ENCODE measurements at regions of chr4 and their contacts with region 1.

Region 1: GRCh38 chr4:105715692-105716278 is 7.2 kb downstream of the GSTCD start:
- DNase-seq: peak in 2 of 9 experiments; percentile 32 to 53
- ATAC-seq: no peak
- H3K4me3 ChIP-seq: no peak overlapping the region
- H3K4me3 Mint-ChIP-seq: no peak overlapping the region
- H3K27ac ChIP-seq: no peak overlapping the region
- H3K27ac Mint-ChIP-seq: no peak overlapping the region
- H3K4me1 ChIP-seq: peaks cover 5% of the 10 kb centered on the region
- H3K4me1 Mint-ChIP-seq: peaks cover 3% of the 10 kb centered on the region
- H3K27me3 ChIP-seq: no peaks in the 10 kb centered on the region
- H3K27me3 Mint-ChIP-seq: no peaks in the 10 kb centered on the region
- CTCF ChIP-seq: peak; percentile 54

Region 2: DNA sequence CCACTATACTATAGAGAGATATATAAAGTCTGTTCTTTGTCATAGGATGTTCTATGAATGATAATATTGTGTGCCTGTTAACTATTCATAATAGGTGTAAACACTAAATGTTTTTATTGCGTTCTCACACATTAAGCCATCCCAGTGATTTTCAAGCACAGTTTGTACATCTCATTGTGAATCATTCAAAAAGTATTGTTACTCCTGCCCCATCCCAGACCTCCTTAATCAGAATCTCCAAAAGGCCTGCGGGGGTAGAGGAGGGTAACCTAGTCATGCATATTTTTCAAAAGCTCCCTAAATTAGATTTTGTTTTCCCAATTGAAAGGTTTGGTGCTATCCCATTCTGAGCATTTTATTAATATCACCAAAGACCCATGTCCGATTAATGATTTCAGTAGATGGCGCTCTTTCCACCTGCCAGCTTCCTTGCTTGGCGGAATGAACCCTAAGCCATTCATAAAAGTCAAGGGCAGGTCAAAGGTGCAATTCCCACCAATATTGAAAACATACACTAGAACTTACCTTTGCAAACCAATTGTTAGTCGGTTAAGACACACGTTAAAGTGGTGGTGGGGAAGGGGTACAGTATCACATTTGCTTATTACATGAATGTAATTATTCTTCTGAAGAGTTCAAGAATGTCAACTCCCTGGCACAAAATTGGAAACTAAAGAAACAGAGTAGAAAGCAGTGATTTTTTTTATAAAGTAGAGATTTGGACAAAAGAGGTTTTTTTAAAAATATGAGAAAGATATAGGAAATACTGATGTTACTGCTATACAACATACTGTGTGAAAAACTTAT is 574.9 kb before region 1 on chr4:
- CTCF ChIA-PET with region 1: interaction called, 5 read pairs
- POLR2A ChIA-PET with region 1: no interaction called
- intact Hi-C with region 1: loop called in 1 of 2 experiments (anchors 1 kb)
- DNase-seq: peak in 7 of 9 experiments; percentile 26 to 77 (median 44)
- ATAC-seq: no peak
- H3K4me3 ChIP-seq: no peak overlapping the region
- H3K4me3 Mint-ChIP-seq: no peak overlapping the region
- H3K27ac ChIP-seq: no peak overlapping the region
- H3K27ac Mint-ChIP-seq: no peak overlapping the region
- H3K4me1 ChIP-seq: peaks cover 6% of the 10 kb centered on the region
- H3K4me1 Mint-ChIP-seq: peaks cover 8% of the 10 kb centered on the region
- H3K27me3 ChIP-seq: no peaks in the 10 kb centered on the region
- H3K27me3 Mint-ChIP-seq: no peaks in the 10 kb centered on the region
- CTCF ChIP-seq: peak; percentile 59

Measured in CD8-positive, alpha-beta T cell (primary cell).